ENCODE measurements at regions of chr19 and their contacts with region 1.

Region 1: GRCh38 chr19:48445606-48446481 is at the start of gene GRWD1:
- DNase-seq: peak; percentile 95
- ATAC-seq: peak; percentile 90
- H3K4me3 ChIP-seq: peak within 1 kb of the TSS; percentile 68 to 75
- H3K27ac ChIP-seq: peak within 1 kb of the TSS in 1 of 2 donors; percentile 58
- H3K4me1 ChIP-seq: no peaks in the 10 kb centered on the region
- H3K27me3 ChIP-seq: no peaks in the 10 kb centered on the region
- total RNA-seq, gene GRWD1: 21.4 to 25.8 TPM

Region 2: GRCh38 chr19:48468775-48469288 is 23.0 kb after region 1 on chr19:
- intact Hi-C with region 1: loop called in 1 of 2 experiments (anchors 1 kb)
- DNase-seq: peak; percentile 99 to 100
- ATAC-seq: peak; percentile 97
- H3K4me3 ChIP-seq: peak overlapping the region in 1 of 2 donors; percentile 87
- H3K27ac ChIP-seq: no peak overlapping the region
- H3K4me1 ChIP-seq: no peaks in the 10 kb centered on the region
- H3K27me3 ChIP-seq: no peaks in the 10 kb centered on the region

Region 3: GRCh38 chr19:48530066-48530720 is 84.3 kb after region 1 on chr19:
- intact Hi-C with region 1: no loop called
- DNase-seq: no peak
- ATAC-seq: no peak
- H3K4me3 ChIP-seq: no peak overlapping the region
- H3K27ac ChIP-seq: no peak overlapping the region
- H3K4me1 ChIP-seq: no peaks in the 10 kb centered on the region
- H3K27me3 ChIP-seq: no peaks in the 10 kb centered on the region